Colonic mucosa (tissue), 4 donors: ENCODE measurements at regions of chr5 and their contacts with region 1.

Region 1: GRCh38 chr5:153974131-153974812 is 64.4 kb downstream of the FAM114A2 start:
- DNase-seq: no peak
- H3K4me3 ChIP-seq: no peak overlapping the region
- H3K27ac ChIP-seq: no peak overlapping the region
- H3K4me1 ChIP-seq: no peaks in the 10 kb centered on the region
- H3K27me3 ChIP-seq: no peaks in the 10 kb centered on the region
- CTCF ChIP-seq: peak; percentile 62

Region 2: GRCh38 chr5:154179846-154180710 is 205.8 kb after region 1 on chr5:
- intact Hi-C with region 1: loop called (anchors 5 kb)
- DNase-seq: peak; percentile 33
- H3K4me3 ChIP-seq: no peak overlapping the region
- H3K27ac ChIP-seq: no peak overlapping the region
- H3K4me1 ChIP-seq: no peaks in the 10 kb centered on the region
- H3K27me3 ChIP-seq: no peaks in the 10 kb centered on the region
- CTCF ChIP-seq: peak; percentile 83

Region 3: GRCh38 chr5:154405078-154405792 is 431.0 kb after region 1 on chr5:
- intact Hi-C with region 1: loop called (anchors 10 kb)
- DNase-seq: peak; percentile 77
- H3K4me3 ChIP-seq: peak overlapping the region; percentile 12
- H3K27ac ChIP-seq: no peak overlapping the region
- H3K4me1 ChIP-seq: peaks cover 8% of the 10 kb centered on the region
- H3K27me3 ChIP-seq: no peaks in the 10 kb centered on the region
- CTCF ChIP-seq: peak; percentile 84

Region 4: GRCh38 chr5:154627698-154628678 is 653.7 kb after region 1 on chr5:
- intact Hi-C with region 1: loop called (anchors 10 kb)
- DNase-seq: no peak
- H3K4me3 ChIP-seq: no peak overlapping the region
- H3K27ac ChIP-seq: no peak overlapping the region
- H3K4me1 ChIP-seq: no peaks in the 10 kb centered on the region
- H3K27me3 ChIP-seq: no peaks in the 10 kb centered on the region
- CTCF ChIP-seq: no peak